Activated naive CD4-positive, alpha-beta T cell treated with anti-CD3 and anti-CD28 coated beads for 36 hours (primary cell): ENCODE measurements at regions of chr1 and their contacts with region 1.

Region 1: GRCh38 chr1:10917513-10918454 is 94.7 kb upstream of the TARDBP start:
- DNase-seq: peak; percentile 21
- H3K4me3 Mint-ChIP-seq: no peak overlapping the region
- H3K27ac Mint-ChIP-seq: no peak overlapping the region
- H3K4me1 Mint-ChIP-seq: peaks cover 35% of the 10 kb centered on the region
- H3K27me3 Mint-ChIP-seq: peaks cover 26% of the 10 kb centered on the region

Region 2: GRCh38 chr1:10932088-10932487 is 14.3 kb after region 1 on chr1:
- CTCF ChIA-PET with region 1: no interaction called
- intact Hi-C with region 1: loop called (anchors 1 kb)
- DNase-seq: peak; percentile 74
- H3K4me3 Mint-ChIP-seq: no peak overlapping the region
- H3K27ac Mint-ChIP-seq: no peak overlapping the region
- H3K4me1 Mint-ChIP-seq: peaks cover 6% of the 10 kb centered on the region
- H3K27me3 Mint-ChIP-seq: no peaks in the 10 kb centered on the region